ENCODE measurements at regions of chr15 and their contacts with region 1.

Region 1: GRCh38 chr15:99059010-99059981 is 45.6 kb upstream of the SYNM start:
- DNase-seq: peak; percentile 71
- H3K4me3 ChIP-seq: peak overlapping the region; percentile 26 to 50 (median 46)
- H3K27ac ChIP-seq: peak overlapping the region; percentile 88 to 92 (median 90)
- H3K4me1 ChIP-seq: peaks cover 4 to 14% (median 10%) of the 10 kb centered on the region in 4 donors
- H3K27me3 ChIP-seq: peaks cover 41% of the 10 kb centered on the region
- CTCF ChIP-seq: peak in 4 of 5 experiments; percentile 48 to 74 (median 64)
- EP300 ChIP-seq: no peak
- POLR2A ChIP-seq: no peak

Region 2: GRCh38 chr15:98428253-98428989 is 630.9 kb before region 1 on chr15:
- in situ Hi-C with region 1: loop called in 1 of 4 experiments (anchors 25 kb)
- intact Hi-C with region 1: no loop called
- DNase-seq: peak; percentile 68
- H3K4me3 ChIP-seq: peak overlapping the region; percentile 16 to 48 (median 20)
- H3K27ac ChIP-seq: peak overlapping the region in 3 of 4 donors; percentile 57 to 74 (median 64)
- H3K4me1 ChIP-seq: peaks cover 0 to 7% (median 2%) of the 10 kb centered on the region in 4 donors
- H3K27me3 ChIP-seq: peaks cover 11% of the 10 kb centered on the region
- CTCF ChIP-seq: peak; percentile 78 to 88 (median 84)
- EP300 ChIP-seq: no peak
- POLR2A ChIP-seq: no peak

Region 3: GRCh38 chr15:98647774-98648653 is 411.3 kb before region 1 on chr15 and contains the start of gene IGF1R:
- in situ Hi-C with region 1: loop called in 3 of 4 experiments (anchors 25 kb)
- intact Hi-C with region 1: loop called (anchors 10 kb)
- DNase-seq: peak; percentile 88
- H3K4me3 ChIP-seq: peak within 1 kb of the TSS; percentile 62 to 90 (median 80)
- H3K27ac ChIP-seq: peak within 1 kb of the TSS; percentile 95 to 98 (median 96)
- H3K4me1 ChIP-seq: peaks cover 7 to 28% (median 12%) of the 10 kb centered on the region in 4 donors
- H3K27me3 ChIP-seq: peaks cover 15% of the 10 kb centered on the region
- CTCF ChIP-seq: peak in 2 of 5 experiments; percentile 42
- EP300 ChIP-seq: no peak
- POLR2A ChIP-seq: no peak
- total RNA-seq, gene IGF1R: 49.4 to 239 (median 109) TPM

Region 4: DNA sequence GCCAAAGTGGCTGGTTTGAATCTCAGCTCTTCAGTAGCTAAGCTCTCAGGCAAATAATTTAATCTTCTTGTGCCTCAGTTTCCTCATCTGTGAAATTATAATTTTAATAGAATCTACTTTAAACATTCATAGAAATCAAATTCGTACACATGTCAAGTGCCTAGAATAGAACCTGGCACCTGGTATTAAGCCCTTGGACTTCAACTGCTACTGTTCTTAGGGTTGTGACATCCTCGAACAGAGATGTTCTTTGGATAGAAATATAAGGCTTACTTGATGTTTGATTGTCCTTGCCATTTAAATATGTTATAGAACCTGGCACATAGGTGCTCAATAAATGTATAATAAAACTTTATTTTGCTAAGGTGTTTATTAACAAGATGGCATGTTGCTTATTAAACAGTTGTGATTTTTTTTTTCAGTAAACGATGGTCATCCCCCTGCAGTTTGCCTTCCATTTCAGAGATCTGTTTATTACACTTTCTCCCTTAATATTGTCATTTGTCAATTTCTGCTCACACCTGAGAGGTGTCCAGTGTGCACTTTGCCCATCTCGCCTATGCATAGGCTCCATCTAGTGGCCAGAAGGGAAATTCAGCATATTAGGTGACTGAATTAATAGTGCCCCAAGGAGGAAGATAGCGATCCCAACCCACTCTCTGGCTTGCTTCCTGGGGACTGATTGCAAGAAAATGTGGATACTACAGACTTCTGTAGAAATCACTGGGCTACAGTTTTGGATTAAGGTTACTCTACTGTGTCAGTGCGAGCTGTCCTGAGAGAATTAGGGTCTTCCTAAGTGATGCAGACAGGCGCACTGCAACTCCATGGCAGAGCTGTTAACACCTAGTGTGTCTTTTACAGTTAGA is 400.2 kb before region 1 on chr15:
- in situ Hi-C with region 1: loop called in 1 of 4 experiments (anchors 25 kb)
- intact Hi-C with region 1: no loop called
- DNase-seq: peak; percentile 21
- H3K4me3 ChIP-seq: no peak overlapping the region
- H3K27ac ChIP-seq: no peak overlapping the region
- H3K4me1 ChIP-seq: peaks cover 8 to 26% (median 16%) of the 10 kb centered on the region in 4 donors
- H3K27me3 ChIP-seq: no peaks in the 10 kb centered on the region
- CTCF ChIP-seq: peak; percentile 66 to 90 (median 85)
- EP300 ChIP-seq: no peak
- POLR2A ChIP-seq: no peak

Region 5: DNA sequence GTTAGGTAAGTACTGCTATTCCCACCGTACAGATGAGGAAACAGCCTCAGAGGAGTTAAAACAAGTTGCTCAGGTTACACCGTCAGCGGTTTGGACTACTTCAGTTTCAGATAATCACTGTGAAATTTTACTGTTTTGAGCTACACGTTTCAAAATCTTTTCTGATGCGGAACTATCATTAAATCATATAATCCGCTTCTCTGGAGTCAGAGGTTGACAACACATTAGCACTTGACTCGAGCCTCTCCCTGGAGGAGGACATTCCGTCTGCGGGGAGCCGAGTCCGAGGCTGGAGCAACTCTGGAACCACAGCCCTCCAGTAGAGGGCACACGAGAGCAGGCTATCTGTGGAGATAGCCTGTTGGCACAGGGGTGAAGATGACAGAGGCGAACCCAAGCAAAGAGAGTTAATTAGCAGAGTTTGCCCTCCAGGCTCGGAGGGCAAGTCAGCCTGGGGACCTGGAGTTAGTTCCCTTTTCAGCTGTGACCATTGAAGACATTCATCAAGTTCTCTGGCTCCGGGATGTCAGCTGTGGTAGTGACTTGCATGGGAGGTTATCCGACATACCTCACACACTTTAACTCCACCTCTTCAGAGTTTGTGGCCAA is 279.7 kb before region 1 on chr15:
- in situ Hi-C with region 1: loop called in 2 of 4 experiments (anchors 25 kb)
- intact Hi-C with region 1: no loop called
- DNase-seq: peak; percentile 88
- H3K4me3 ChIP-seq: no peak overlapping the region
- H3K27ac ChIP-seq: peak overlapping the region in 2 of 4 donors; percentile 22 to 29
- H3K4me1 ChIP-seq: peaks cover 3 to 47% (median 9%) of the 10 kb centered on the region in 4 donors
- H3K27me3 ChIP-seq: no peaks in the 10 kb centered on the region
- CTCF ChIP-seq: peak; percentile 86 to 91 (median 88)
- EP300 ChIP-seq: no peak
- POLR2A ChIP-seq: no peak

Measured in transverse colon (tissue), 4 donors.